Activated naive CD4-positive, alpha-beta T cell treated with anti-CD3 and anti-CD28 coated beads, Interleukin-2, amount 10 ng/mL, durations not matched to agents 7 days and 5 days (primary cell): ENCODE measurements at regions of chr1 and their contacts with region 1.

Region 1: GRCh38 chr1:155001675-155002463 is 733 bp upstream of the ZBTB7B start:
- DNase-seq: peak; percentile 100
- H3K4me3 Mint-ChIP-seq: peak overlapping the region; percentile 92
- H3K27ac Mint-ChIP-seq: peak overlapping the region; percentile 95
- H3K4me1 Mint-ChIP-seq: peaks cover 61% of the 10 kb centered on the region
- H3K27me3 Mint-ChIP-seq: peaks cover 4% of the 10 kb centered on the region

Region 2: DNA sequence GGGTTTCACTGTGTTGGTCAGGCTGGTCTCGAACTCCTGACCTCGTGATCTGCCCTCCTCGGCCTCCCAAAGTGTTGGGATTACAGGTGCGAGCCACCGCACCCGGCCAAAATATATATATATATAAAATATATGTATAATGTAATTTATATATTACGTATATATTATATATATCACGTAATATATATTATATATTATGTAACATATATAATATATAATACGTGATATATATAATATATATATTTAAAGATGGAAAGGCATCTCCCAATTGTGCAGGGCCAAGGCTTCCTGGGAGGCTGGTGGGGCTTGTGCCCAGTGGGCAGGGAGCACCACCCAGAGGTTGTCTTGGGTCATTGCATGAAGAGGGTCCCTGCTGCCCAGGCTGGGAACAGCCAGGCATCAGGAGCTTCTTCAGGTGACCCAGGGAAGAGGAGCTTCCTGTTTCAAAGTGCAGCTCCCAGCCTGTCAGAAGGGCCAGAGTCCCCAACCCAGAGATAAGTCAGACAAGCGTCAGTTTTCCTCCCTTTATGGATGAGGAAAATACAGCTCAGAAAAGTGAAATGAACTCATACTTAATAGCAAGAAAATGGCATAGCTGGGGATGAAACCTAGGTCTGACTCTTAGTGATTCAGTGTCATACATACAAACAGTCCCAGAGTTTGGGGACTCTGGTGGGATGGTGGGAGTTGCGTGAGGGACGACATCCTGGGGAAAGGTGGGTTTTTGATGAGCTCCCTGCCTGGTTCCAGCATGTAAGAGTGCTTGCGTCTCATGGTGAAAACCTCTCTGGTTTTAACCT is 455.4 kb before region 1 on chr1:
- CTCF ChIA-PET with region 1: no interaction called
- DNase-seq: peak; percentile 73
- H3K4me3 Mint-ChIP-seq: no peak overlapping the region
- H3K27ac Mint-ChIP-seq: no peak overlapping the region
- H3K4me1 Mint-ChIP-seq: peaks cover 15% of the 10 kb centered on the region
- H3K27me3 Mint-ChIP-seq: peaks cover 19% of the 10 kb centered on the region

Region 3: DNA sequence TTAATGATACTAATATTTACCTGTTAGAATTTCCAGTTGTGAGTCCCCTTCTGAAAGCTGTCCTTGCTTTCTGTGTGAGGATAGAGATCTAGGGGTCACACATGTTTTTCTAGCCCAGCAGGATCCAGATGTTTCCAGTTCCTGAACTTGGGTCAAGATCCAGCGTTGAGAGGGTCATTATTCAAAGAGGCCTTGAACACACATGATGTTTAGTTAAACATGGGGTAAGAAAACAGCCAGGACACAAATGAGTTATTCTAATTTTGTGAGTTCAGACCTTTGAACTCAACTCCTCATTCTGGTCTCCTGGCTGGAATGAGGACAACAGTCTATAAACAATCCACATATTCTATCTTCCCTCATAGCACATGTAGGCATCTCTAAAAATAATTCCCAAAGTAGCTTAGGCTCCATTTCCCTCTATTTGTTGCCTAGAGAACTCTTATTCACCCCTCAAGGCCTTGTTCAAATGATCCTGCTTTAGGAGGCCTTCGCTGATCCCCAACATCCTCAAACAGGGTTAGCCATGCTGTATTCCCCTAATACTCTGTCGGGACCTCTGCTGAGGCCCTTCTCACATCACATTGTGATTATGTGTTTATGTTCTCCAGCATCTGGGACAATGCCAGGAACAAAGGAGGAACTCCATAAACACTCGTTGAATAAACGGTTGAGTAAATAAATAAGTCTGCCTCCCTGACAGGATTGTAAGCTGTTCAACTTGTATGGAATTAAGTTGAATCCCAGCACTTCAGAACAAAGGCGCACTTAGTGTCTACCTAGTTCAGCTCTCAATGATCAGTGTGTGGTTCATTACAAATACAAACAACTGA is 116.8 kb before region 1 on chr1:
- CTCF ChIA-PET with region 1: no interaction called
- DNase-seq: no peak
- H3K4me3 Mint-ChIP-seq: no peak overlapping the region
- H3K27ac Mint-ChIP-seq: no peak overlapping the region
- H3K4me1 Mint-ChIP-seq: peaks cover 21% of the 10 kb centered on the region
- H3K27me3 Mint-ChIP-seq: peaks cover 19% of the 10 kb centered on the region

Region 4: DNA sequence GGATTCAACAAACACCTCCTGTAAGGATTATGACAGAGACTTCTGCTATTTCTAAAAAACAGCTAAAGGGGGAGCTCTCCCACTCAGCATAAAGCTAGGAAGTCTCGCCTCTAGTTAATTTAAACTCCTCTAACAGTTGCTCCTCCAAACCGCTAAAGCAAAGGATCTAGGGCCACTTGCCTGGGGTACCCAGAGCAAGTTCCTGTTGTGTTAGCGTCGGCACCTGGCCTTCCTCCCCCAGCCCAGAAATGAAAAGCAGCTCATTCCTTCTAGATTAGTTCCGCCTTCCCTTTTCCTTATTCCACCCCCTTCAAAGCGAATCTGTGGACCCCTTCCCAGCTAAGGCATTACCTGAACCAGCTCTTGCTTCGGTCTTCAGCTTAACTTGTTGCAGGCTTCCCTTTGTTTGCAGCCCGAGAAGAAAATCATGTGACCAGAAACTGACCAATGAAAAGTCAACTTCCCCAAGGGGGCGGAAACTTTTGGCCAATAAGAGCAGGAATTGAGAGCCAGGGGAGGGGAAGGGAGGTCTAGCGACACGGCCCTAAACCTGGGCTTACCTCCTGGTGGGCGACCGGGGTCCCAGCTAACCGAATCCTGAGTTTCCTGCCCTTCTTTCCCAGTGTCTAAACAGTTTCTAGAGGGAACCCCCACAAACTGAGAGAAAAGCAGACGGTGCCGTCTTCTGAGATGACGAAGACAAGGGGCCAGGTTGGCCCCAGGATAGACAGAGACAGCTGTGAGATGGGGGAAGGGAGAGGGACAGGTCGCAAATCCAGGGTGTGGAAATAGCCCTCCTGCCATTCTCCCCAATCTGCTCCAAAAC is 45.9 kb before region 1 on chr1 and contains the start of gene PBXIP1:
- CTCF ChIA-PET with region 1: interaction called, 17 read pairs
- DNase-seq: peak; percentile 89
- H3K4me3 Mint-ChIP-seq: peak within 1 kb of the TSS; percentile 88
- H3K27ac Mint-ChIP-seq: peak within 1 kb of the TSS; percentile 93
- H3K4me1 Mint-ChIP-seq: peaks cover 84% of the 10 kb centered on the region
- H3K27me3 Mint-ChIP-seq: no peaks in the 10 kb centered on the region

Region 5: GRCh38 chr1:154961497-154962262 is 40.2 kb before region 1 on chr1 and contains the start of gene PYGO2:
- CTCF ChIA-PET with region 1: interaction called, 17 read pairs
- DNase-seq: peak; percentile 88
- H3K4me3 Mint-ChIP-seq: peak within 1 kb of the TSS; percentile 96
- H3K27ac Mint-ChIP-seq: peak within 1 kb of the TSS; percentile 90
- H3K4me1 Mint-ChIP-seq: peaks cover 50% of the 10 kb centered on the region
- H3K27me3 Mint-ChIP-seq: no peaks in the 10 kb centered on the region

Region 6: DNA sequence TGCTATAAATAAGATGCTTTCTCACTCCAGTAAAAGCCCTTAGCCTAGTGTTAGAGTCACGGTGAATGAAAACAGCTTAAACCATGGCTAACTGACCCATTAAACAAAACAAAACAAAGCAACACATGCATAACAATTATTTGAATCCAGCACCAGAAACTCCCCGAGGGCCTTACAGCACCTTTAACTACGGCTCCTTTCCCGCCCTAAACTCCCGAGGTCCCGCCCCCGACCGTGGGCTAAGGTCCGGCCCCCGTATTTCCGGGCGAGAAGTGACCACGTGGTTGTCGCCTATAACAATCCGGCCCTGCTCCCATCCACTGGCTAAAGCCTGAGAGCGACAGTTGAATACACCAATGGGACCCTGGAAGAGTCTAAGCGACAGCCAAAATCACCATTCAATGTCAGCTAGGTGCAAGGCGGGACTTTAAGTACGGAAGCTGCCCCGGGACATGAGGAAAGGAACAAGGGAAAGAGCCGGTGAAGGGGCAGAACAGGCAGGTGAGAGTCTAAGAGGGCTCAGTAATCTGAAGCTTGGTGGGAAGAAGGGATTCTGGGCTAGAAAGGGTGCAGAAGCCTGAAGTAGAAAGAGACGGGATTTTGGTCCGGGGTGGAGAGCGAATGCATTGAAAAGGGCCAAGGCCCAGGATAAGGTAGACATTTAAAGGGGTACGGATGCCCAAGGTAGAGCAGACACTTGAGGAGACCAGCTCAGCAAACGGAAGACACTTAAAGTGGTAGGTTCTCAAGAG is 18.8 kb before region 1 on chr1 and contains the start of gene FLAD1:
- CTCF ChIA-PET with region 1: interaction called, 72 read pairs
- DNase-seq: peak; percentile 98
- H3K4me3 Mint-ChIP-seq: no peak within 1 kb of the TSS
- H3K27ac Mint-ChIP-seq: no peak within 1 kb of the TSS
- H3K4me1 Mint-ChIP-seq: peaks cover 30% of the 10 kb centered on the region
- H3K27me3 Mint-ChIP-seq: no peaks in the 10 kb centered on the region

Region 7: DNA sequence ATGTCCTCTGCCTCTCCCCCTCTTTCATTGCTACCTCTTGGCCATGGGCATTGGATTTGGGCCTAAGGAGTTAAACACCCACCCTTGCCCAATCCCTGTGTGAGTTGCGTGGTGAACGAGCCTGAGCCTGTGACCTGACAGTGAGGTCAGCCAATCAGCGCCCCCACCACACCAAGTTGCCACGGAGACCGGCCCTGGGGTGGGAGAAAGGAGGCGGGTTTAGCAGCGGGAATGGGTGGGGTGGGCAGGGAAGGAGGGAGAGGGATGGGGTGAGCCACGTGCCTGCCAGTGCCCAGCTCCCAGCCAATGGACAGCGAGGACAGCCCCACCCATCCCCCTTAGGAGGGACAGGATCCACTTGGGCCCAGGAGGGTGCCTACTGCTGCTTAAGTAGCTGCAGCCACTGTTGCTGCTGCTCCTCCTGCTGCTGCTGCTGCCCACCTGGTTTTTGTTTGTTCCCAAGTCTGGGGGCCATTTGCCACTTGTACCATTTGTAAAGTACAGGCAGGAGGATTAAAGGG is 10.2 kb after region 1 on chr1:
- CTCF ChIA-PET with region 1: interaction called, 48 read pairs
- DNase-seq: peak; percentile 68
- H3K4me3 Mint-ChIP-seq: peak overlapping the region; percentile 93
- H3K27ac Mint-ChIP-seq: peak overlapping the region; percentile 87
- H3K4me1 Mint-ChIP-seq: peaks cover 84% of the 10 kb centered on the region
- H3K27me3 Mint-ChIP-seq: no peaks in the 10 kb centered on the region

Region 8: GRCh38 chr1:155049651-155050559 is 48.0 kb after region 1 on chr1:
- CTCF ChIA-PET with region 1: no interaction called
- DNase-seq: no peak
- H3K4me3 Mint-ChIP-seq: peak overlapping the region; percentile 82
- H3K27ac Mint-ChIP-seq: no peak overlapping the region
- H3K4me1 Mint-ChIP-seq: peaks cover 34% of the 10 kb centered on the region
- H3K27me3 Mint-ChIP-seq: peaks cover 12% of the 10 kb centered on the region

Region 9: GRCh38 chr1:155094622-155094948 is 92.7 kb after region 1 on chr1:
- CTCF ChIA-PET with region 1: no interaction called
- DNase-seq: no peak
- H3K4me3 Mint-ChIP-seq: no peak overlapping the region
- H3K27ac Mint-ChIP-seq: no peak overlapping the region
- H3K4me1 Mint-ChIP-seq: peaks cover 5% of the 10 kb centered on the region
- H3K27me3 Mint-ChIP-seq: peaks cover 73% of the 10 kb centered on the region